Dorsolateral prefrontal cortex (tissue), 120 donors: ENCODE measurements at regions of chr1 and their contacts with region 1.

Region 1: GRCh38 chr1:75265792-75266191 is 131.6 kb downstream of the LHX8 start:
- DNase-seq: no peak
- H3K4me3 ChIP-seq: no peak overlapping the region
- H3K27ac ChIP-seq: no peak overlapping the region
- H3K27me3 ChIP-seq: no peaks in the 10 kb centered on the region
- CTCF ChIP-seq: peak; percentile 43 to 81 (median 68)

Region 2: DNA sequence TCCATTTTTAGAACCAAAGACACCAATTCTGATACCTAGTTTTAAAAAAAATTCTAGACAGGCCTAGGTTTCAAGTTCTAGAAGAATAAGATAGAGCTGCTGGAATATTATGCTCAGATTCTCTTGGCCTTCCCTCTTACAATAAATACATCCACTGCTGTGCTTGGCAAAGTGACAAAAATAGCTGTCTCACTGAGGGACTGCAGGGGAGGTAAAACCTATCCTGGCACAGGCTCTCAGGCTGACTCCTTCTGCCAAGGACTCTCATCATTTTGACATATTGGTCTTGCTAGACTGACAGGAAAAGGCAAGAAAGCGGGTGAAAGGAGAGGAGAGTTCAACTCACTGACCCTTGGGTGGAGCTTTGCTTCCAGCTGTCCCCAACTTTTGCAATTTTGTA is 328.6 kb before region 1 on chr1:
- intact Hi-C with region 1: no loop called
- DNase-seq: no peak
- H3K4me3 ChIP-seq: no peak overlapping the region
- H3K27ac ChIP-seq: no peak overlapping the region
- H3K27me3 ChIP-seq: no peaks in the 10 kb centered on the region
- CTCF ChIP-seq: no peak

Region 3: DNA sequence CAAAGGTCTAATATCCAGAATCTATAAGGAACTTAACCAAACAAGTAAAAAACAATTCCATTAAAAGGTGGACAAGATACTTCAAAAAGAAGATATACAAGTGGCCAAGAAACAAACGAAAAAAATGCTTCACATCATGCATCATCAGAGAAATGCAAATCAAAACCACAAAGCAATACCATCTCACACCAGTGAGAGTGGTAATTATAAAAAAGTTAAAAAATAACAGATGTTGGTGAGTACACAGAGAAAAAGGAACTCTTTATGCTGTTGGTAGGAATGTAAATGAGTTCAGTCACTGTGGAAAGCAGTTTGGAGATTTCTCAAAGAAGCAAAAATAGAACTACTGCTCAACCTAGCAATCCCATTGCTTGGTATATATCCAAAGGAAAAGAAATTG is 126.5 kb after region 1 on chr1:
- intact Hi-C with region 1: no loop called
- DNase-seq: no peak
- H3K4me3 ChIP-seq: no peak overlapping the region
- H3K27ac ChIP-seq: peak overlapping the region in 3 of 59 donors; percentile 28 to 48 (median 30)
- H3K27me3 ChIP-seq: no peaks in the 10 kb centered on the region
- CTCF ChIP-seq: no peak

Region 4: GRCh38 chr1:75625795-75626194 is 360.0 kb after region 1 on chr1:
- intact Hi-C with region 1: loop called in 1 of 2 experiments (anchors 10 kb)
- DNase-seq: no peak
- H3K4me3 ChIP-seq: no peak overlapping the region
- H3K27ac ChIP-seq: no peak overlapping the region
- H3K27me3 ChIP-seq: peaks cover 0 to 10% (median 0%) of the 10 kb centered on the region in 45 donors
- CTCF ChIP-seq: no peak

Region 5: DNA sequence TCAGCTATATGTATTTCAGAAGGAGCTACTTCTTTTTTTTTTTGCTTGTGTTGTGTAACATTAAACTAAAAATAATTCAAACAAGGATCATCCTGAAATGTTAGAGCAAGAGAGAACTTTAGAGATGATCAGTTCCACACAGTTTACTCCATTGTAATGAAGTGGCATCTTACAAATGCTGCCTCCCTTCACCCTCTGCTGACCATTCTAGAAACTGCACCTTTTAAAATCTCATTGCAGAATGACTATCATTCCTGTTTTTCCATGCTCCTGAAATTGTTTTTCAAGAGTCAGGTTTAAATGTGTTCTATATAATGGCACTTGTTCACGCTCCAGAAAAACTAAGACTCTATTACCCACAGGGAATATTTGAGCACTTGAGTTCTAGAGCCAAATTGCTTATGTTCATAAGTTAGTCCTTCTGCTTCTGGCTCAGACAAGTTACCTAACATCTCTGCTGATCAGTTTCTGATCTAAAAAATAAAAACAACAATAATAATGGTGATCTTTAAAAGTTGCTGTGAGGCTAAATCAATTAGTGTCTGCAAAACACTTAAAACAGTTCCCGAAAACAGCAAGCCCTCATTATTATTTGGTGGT is 366.7 kb after region 1 on chr1:
- intact Hi-C with region 1: loop called (anchors 2 to 10 kb)
- DNase-seq: peak in 1 of 10 donors; percentile 4
- H3K4me3 ChIP-seq: no peak overlapping the region
- H3K27ac ChIP-seq: no peak overlapping the region
- H3K27me3 ChIP-seq: peaks cover 0 to 6% (median 0%) of the 10 kb centered on the region in 45 donors
- CTCF ChIP-seq: peak; percentile 58 to 88 (median 79)